Heart right ventricle (tissue), 16 donors: ENCODE measurements at regions of chr12 and their contacts with region 1.

Region 1: DNA sequence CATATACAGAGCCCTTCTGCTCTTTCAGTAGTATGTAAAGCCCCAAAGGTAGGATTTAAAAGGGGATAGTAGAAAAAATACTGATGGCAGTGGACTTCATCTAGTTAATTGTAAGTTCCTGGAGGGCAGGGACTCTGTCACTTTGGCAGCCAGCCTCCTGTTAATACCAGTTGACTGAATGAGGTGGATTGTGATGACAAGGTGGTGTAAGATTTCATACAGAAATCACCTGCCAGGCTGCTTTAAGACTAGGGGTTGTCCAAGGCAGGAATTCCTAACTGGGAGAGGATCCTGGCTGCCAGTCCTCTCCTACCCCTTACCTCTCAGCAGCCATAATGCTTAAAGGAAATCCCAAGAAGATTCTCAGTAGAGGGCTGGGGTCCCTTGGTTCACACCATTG is 7.3 kb downstream of the DYRK2 start:
- DNase-seq: no peak
- ATAC-seq: peak in 4 of 8 donors; percentile 6 to 56 (median 31)
- H3K4me3 ChIP-seq: no peak overlapping the region
- H3K27ac ChIP-seq: peak overlapping the region in 5 of 10 donors; percentile 14 to 56 (median 41)
- H3K4me1 ChIP-seq: peaks cover 16 to 100% (median 88%) of the 10 kb centered on the region in 9 donors
- H3K27me3 ChIP-seq: no peaks in the 10 kb centered on the region
- CTCF ChIP-seq: no peak

Region 2: DNA sequence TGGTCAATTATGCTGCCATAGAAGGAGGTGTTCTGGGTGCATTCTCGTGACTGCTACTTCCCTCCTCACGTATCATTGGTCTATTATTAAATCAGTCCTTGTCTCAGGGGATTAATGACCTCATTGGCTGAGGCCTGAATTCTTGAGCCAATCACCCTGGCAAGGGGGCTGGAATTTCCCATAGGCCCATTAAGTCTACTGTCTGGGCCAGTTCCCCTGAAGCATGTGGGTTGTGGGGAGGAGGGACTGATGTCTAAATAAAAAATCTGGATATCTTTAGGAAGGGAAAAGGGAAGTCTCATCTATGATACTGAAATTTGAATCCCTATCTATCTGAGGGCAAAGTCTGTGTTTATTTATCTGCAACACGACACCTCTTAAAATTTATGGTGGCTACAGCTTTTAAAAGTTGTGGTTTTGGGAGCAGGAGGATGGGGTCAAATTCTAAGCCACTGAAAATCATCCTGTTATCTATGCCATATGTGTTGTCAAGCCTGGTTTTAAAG is 64.6 kb after region 1 on chr12:
- intact Hi-C with region 1: loop called in 6 of 10 experiments (anchors 5 to 10 kb)
- DNase-seq: peak in 1 of 2 donors; percentile 67
- ATAC-seq: peak; percentile 73 to 88 (median 82)
- H3K4me3 ChIP-seq: no peak overlapping the region
- H3K27ac ChIP-seq: peak overlapping the region; percentile 18 to 86 (median 69)
- H3K4me1 ChIP-seq: peaks cover 0 to 45% (median 18%) of the 10 kb centered on the region in 9 donors
- H3K27me3 ChIP-seq: no peaks in the 10 kb centered on the region
- CTCF ChIP-seq: no peak